Activated T-helper 1 cell treated with anti-CD3 and anti-CD28 coated beads, Interleukin-12 subunit alpha, Interleukin-12 subunit beta, Interleukin-2, Interleukin-4 antibody, amounts not matched to agents 30 ng/mL and 10 ng/mL and 1 ng/mL, durations not matched to agents 14 hours and 24 hours and 36 hours (primary cell): ENCODE measurements at regions of chr10 and their contacts with region 1.

Region 1: DNA sequence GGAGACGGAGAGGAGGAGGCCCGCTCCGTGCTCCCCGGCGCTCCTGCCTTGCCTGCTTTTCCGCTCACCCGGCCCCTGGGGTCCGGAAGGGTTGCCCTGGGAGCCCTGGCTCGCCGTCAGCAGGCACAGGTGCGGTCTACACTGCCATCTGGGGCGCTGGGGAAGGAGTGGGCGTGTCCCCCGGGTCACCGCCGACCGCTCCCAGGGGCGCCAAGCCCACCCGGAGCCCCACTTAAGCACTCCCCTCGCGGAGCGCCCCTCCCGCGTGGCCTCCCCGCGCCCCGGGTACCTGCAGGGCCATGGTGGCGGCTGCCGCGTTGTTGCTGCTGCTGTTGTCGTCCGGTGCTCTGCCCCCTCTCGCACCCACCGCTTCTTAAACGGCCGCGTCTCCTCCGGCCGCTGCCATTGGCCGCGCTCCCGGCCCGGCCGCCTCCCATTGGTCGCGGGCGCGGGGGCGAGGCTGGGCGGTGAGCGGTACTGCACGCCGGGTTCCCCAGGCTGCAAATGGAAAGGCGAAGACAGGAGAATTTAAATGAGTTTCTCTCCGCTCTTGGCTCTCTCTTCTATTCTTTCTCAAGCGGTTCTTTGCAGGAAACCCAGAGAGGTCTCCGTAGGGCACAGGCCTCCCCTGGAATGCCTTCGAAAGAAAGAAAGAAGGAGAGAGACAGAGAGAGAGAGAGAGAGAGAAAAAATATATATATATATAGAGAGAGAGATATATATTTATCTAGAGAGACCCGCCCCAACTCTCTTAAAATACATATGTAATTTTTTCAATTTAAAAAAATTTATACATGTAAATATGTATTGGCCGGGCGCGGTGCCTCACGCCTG is at the start of gene ACBD7:
- DNase-seq: peak; percentile 81
- H3K4me3 Mint-ChIP-seq: peak within 1 kb of the TSS; percentile 69
- H3K27ac Mint-ChIP-seq: no peak within 1 kb of the TSS
- H3K4me1 Mint-ChIP-seq: peaks cover 5% of the 10 kb centered on the region
- H3K27me3 Mint-ChIP-seq: peaks cover 12% of the 10 kb centered on the region
- total RNA-seq, gene ACBD7: 2.3 and 2.7 TPM in 2 replicates

Region 2: DNA sequence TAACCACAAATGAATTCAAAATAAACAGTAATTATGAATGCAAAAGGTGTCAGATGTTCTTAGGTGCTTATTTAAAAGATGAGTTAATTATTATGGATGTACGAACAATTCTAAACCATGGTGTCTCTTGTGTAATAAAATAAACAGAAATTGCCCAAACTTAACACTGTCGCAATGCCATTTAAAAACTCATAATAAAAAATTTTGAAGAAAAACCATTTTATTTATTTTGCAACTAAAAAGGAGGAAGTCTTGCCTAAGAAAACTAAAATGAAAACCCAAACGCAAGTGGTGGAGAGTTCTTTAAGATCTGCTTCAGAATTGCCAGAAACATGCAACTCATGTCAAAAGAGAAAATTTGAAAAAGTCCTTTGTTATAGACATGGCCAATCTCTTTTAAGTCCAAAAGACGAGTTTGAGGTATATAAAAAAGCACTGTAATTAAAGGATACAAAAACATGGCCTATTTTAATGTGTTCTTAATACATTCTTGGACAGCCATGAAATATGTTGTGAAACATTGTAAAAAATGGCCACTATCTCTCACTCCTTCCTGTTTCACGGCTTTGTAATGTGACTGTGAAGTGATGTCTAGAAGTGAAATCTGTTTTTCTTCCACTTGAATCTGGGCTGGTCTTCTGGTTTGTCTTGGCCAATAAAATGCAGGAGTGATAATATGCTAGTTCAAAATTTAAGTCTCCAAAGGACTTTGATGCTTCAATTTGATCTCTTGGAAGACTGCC is 1179.0 kb before region 1 on chr10:
- intact Hi-C with region 1: loop called (anchors 5 kb)
- DNase-seq: no peak
- H3K4me3 Mint-ChIP-seq: no peak overlapping the region
- H3K27ac Mint-ChIP-seq: no peak overlapping the region
- H3K4me1 Mint-ChIP-seq: no peaks in the 10 kb centered on the region
- H3K27me3 Mint-ChIP-seq: no peaks in the 10 kb centered on the region

Region 3: DNA sequence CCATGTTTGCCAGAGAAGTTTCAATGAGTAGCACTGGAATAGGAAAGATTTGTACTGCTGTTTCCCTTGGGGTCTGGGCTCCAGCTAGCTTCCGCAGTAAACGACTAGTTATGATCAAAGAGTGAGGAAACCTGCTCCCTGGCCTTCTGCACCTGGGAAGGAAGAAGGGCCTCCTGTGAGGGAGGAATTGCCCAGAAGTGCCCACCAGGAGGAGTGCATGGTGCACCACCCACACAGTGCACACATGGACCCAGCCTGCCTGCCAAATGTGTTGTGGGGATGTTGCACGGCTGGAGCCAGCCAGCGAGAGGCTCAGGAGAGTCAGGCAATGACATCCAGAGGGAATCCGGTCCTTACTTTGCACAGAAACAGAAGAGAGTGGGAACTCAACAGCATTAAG is 286.9 kb before region 1 on chr10:
- intact Hi-C with region 1: no loop called
- DNase-seq: no peak
- H3K4me3 Mint-ChIP-seq: no peak overlapping the region
- H3K27ac Mint-ChIP-seq: no peak overlapping the region
- H3K4me1 Mint-ChIP-seq: no peaks in the 10 kb centered on the region
- H3K27me3 Mint-ChIP-seq: peaks cover 26% of the 10 kb centered on the region

Region 4: DNA sequence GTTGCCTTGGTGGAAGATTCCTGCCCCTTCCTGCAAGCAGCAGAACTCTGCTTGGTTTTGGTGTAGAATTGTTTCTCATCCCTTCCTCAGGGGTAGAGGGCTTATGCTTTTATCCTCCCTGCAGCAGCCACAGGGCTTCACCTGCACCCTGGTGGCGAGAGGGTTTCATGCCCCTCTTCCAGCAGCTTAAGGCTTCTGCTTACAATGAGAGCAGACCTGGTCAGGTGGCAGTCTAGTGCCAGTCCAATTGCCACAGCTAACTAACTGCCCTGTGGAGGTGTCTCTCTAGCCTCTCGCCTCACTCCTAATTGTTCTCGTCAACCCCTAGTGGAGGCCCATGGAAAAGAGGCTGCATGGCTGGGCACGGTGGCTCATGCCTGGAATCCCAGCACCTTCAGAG is 19.4 kb before region 1 on chr10:
- intact Hi-C with region 1: no loop called
- DNase-seq: no peak
- H3K4me3 Mint-ChIP-seq: no peak overlapping the region
- H3K27ac Mint-ChIP-seq: no peak overlapping the region
- H3K4me1 Mint-ChIP-seq: no peaks in the 10 kb centered on the region
- H3K27me3 Mint-ChIP-seq: peaks cover 4% of the 10 kb centered on the region